ENCODE measurements at regions of chr2 and their contacts with region 1.

Region 1: DNA sequence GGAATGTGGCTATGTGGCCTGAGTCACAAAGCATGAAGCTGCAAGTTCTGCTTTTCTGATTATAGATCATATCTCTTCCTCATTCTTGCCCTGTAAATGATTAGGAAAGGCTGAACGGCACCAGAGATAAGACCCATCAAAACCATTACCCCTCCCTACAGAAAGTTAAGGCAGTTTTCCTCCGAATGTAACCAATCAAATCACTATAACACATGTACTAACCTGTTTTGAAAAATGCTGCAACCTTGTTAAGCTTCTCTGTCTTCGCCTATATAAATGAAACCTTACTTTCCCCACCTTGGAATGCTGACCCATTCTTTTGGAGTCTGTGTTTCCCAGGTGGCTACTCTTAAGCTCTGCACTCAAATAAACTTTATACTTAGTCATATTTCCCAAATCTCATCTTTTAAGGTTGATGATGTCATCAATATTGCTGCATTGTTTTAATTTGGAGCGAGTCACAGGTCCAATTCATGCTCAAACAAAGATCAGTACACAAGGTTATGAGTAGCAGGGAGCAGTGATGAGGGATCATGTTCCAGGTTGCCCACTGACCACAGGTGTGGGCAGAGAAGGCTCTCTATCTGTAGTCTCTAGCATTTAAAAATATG is 662.3 kb downstream of the IRS1 start:
- DNase-seq: peak; percentile 99
- H3K4me3 ChIP-seq: peak overlapping the region in 2 of 3 experiments; percentile 6 to 16
- H3K27ac ChIP-seq: peak overlapping the region; percentile 95
- H3K4me1 ChIP-seq: peaks cover 14% of the 10 kb centered on the region
- H3K27me3 ChIP-seq: no peaks in the 10 kb centered on the region
- CTCF ChIP-seq: no peak

Region 2: GRCh38 chr2:225889446-225889850 is 247.9 kb before region 1 on chr2:
- CTCF ChIA-PET with region 1: no interaction called
- dilution Hi-C with region 1: no loop called
- in situ Hi-C with region 1: loop called in 1 of 2 experiments (anchors 25 kb)
- intact Hi-C with region 1: loop called (anchors 1 kb)
- DNase-seq: peak; percentile 73
- H3K4me3 ChIP-seq: no peak overlapping the region
- H3K27ac ChIP-seq: peak overlapping the region; percentile 45
- H3K4me1 ChIP-seq: peaks cover 4% of the 10 kb centered on the region
- H3K27me3 ChIP-seq: no peaks in the 10 kb centered on the region
- CTCF ChIP-seq: peak; percentile 60 to 80

Region 3: DNA sequence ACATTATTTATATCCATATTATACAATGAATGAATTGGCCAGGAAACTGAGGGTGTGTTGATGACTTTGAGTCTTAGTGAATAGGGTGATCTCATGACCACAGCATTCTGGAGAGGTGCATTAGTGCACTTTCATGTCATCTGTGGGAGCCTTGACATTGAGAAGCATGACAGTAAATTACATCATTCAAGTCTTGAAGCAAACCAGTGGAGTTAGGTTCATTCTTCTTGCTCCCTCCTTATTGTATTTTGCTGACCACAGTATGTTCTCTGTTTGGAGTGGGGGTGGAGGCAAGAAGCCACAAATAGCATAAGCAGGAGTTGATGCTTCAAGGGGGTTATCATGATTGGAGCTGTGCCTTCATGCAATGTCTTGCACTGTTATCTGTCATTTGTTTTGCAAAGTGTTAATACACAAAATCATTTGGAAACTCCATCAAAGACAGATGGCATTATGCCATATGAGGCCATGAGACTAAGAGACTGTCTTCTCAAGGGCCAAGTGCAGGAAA is 57.6 kb before region 1 on chr2:
- CTCF ChIA-PET with region 1: no interaction called
- dilution Hi-C with region 1: no loop called
- in situ Hi-C with region 1: no loop called
- intact Hi-C with region 1: loop called (anchors 2 kb)
- DNase-seq: peak; percentile 96
- H3K4me3 ChIP-seq: no peak overlapping the region
- H3K27ac ChIP-seq: peak overlapping the region; percentile 94
- H3K4me1 ChIP-seq: peaks cover 46% of the 10 kb centered on the region
- H3K27me3 ChIP-seq: no peaks in the 10 kb centered on the region
- CTCF ChIP-seq: no peak

Region 4: GRCh38 chr2:226185616-226186211 is 48.4 kb after region 1 on chr2:
- CTCF ChIA-PET with region 1: no interaction called
- dilution Hi-C with region 1: no loop called
- in situ Hi-C with region 1: no loop called
- intact Hi-C with region 1: loop called (anchors 1 kb)
- DNase-seq: peak; percentile 83
- H3K4me3 ChIP-seq: no peak overlapping the region
- H3K27ac ChIP-seq: peak overlapping the region; percentile 99
- H3K4me1 ChIP-seq: peaks cover 15% of the 10 kb centered on the region
- H3K27me3 ChIP-seq: no peaks in the 10 kb centered on the region
- CTCF ChIP-seq: no peak

Region 5: DNA sequence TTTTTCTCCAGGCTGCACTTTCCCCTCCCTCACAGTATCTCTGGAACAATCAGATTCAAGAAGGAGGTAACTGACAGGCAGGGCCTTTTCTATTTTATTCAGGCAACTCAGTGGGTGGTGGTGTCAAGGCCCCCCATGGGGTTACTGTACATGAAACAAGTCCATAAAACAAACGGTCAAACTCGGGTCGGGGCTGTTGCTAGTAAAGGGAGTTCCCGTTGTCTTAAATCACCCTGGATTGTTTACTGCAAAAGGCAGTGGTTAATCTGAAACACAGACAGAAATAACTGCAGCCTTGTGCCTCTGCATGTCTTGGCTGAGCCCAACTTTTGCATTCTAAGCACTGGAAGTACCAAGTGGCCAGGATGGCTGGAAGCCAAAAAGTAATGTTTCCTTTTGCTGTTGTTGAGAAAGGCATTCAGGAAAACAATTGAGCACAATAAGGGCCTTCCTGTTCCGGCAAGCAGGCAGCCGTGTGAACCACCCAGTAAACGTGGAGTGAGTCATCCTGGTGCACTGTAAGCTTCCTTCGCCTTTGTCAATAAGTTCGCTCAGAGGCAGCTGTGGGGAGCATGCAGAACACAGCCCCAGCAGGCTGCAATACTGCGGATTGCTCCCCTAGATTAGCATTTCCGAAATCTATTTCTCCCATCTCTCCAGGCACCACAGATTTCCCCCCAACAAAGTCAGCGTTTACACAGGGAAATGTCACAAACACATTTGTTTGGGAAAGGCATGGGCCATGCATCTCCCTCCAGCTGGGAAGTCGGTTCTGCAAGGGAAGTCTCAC is 512.8 kb after region 1 on chr2:
- CTCF ChIA-PET with region 1: no interaction called
- dilution Hi-C with region 1: no loop called
- in situ Hi-C with region 1: no loop called
- intact Hi-C with region 1: loop called (anchors 10 kb)
- DNase-seq: peak; percentile 98
- H3K4me3 ChIP-seq: no peak overlapping the region
- H3K27ac ChIP-seq: peak overlapping the region; percentile 92
- H3K4me1 ChIP-seq: peaks cover 45% of the 10 kb centered on the region
- H3K27me3 ChIP-seq: no peaks in the 10 kb centered on the region
- CTCF ChIP-seq: no peak

Measured in mammary epithelial cell (primary cell).